HepG2 (cell line): ENCODE measurements at regions of chr4 and their contacts with region 1.

Region 1: GRCh38 chr4:170853422-170854021 is 763.8 kb upstream of the AADAT start:
- DNase-seq: peak; percentile 19
- ATAC-seq: peak; percentile 81
- H3K4me3 ChIP-seq: no peak overlapping the region
- H3K27ac ChIP-seq: no peak overlapping the region
- H3K4me1 ChIP-seq: no peaks in the 10 kb centered on the region
- H3K27me3 ChIP-seq: no peaks in the 10 kb centered on the region
- CTCF ChIP-seq: peak; percentile 68
- EP300 ChIP-seq: no peak
- POLR2A ChIP-seq: no peak
- RAD21 ChIP-seq: no peak

Region 2: DNA sequence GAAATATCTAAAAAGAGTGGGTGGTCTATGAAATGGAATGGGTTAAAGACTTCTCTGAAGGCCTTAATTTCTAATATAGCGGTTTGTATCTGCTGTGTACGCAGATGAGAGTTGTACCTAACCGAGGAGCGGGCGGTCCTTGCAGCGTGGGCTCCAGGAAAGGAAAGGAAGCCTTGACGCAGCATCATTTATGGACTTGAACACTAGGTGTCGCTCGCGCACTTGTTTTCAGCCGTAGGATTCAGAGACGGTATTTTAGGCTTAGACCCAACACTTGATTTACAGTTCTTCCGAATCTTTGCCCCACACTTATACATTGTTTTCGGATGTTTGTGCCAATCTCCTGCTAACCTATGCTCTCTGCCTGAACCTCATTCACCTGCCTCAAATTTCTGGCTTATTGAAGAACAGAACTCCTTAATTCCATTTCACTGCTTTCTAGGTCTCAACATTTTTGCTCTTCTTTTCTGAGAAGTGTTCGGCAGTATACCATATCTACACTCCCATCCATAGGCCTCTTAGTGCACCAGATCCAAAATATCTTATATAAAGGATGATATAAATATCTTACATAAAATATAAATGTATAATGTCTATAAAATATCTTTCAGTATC is 714.8 kb before region 1 on chr4:
- CTCF ChIA-PET with region 1: no interaction called
- POLR2A ChIA-PET with region 1: no interaction called
- in situ Hi-C with region 1: loop called (anchors 25 kb)
- intact Hi-C with region 1: no loop called
- DNase-seq: peak; percentile 57
- ATAC-seq: peak; percentile 94
- H3K4me3 ChIP-seq: no peak overlapping the region
- H3K27ac ChIP-seq: no peak overlapping the region
- H3K4me1 ChIP-seq: no peaks in the 10 kb centered on the region
- H3K27me3 ChIP-seq: no peaks in the 10 kb centered on the region
- CTCF ChIP-seq: peak; percentile 89
- EP300 ChIP-seq: no peak
- POLR2A ChIP-seq: no peak
- RAD21 ChIP-seq: no peak

Region 3: GRCh38 chr4:170259631-170260153 is 593.8 kb before region 1 on chr4:
- CTCF ChIA-PET with region 1: interaction called, 18 read pairs
- POLR2A ChIA-PET with region 1: no interaction called
- in situ Hi-C with region 1: no loop called
- intact Hi-C with region 1: loop called (anchors 1 kb)
- DNase-seq: peak; percentile 92
- ATAC-seq: peak; percentile 100
- H3K4me3 ChIP-seq: no peak overlapping the region
- H3K27ac ChIP-seq: no peak overlapping the region
- H3K4me1 ChIP-seq: no peaks in the 10 kb centered on the region
- H3K27me3 ChIP-seq: no peaks in the 10 kb centered on the region
- CTCF ChIP-seq: peak; percentile 95
- EP300 ChIP-seq: no peak
- POLR2A ChIP-seq: no peak
- RAD21 ChIP-seq: peak; percentile 72

Region 4: GRCh38 chr4:170307182-170307581 is 546.3 kb before region 1 on chr4:
- CTCF ChIA-PET with region 1: no interaction called
- POLR2A ChIA-PET with region 1: no interaction called
- in situ Hi-C with region 1: no loop called
- intact Hi-C with region 1: no loop called
- DNase-seq: no peak
- ATAC-seq: no peak
- H3K4me3 ChIP-seq: no peak overlapping the region
- H3K27ac ChIP-seq: no peak overlapping the region
- H3K4me1 ChIP-seq: no peaks in the 10 kb centered on the region
- H3K27me3 ChIP-seq: no peaks in the 10 kb centered on the region; a peak in 1 of 5 replicates
- CTCF ChIP-seq: no peak
- EP300 ChIP-seq: no peak
- POLR2A ChIP-seq: no peak
- RAD21 ChIP-seq: no peak

Region 5: DNA sequence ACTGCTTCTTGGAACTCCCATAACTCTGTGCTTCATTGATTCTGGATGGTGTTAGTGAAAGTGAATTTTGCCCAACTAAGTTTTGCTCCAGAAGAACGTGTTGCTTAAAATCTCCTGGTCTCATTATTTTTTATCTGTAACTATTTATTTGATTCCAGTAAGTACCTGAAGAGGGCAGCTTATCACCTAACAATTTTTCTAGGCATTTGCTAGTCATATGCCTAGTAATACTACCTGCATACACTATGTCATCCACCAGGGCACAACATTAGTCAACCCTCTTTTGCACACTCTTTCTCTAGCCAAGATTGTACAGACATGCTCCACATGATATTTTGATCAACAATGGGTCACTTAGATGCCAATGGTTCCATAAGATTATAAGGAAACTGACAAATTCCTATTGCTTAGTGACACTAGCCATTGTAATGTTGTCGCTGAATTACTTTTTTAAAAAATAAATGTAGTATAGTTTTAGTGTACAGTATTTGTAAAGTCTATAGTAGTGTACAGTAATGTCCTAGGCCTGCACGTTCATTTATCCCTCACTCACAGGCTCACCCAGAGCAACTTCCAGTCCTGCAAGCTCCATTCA is 263.8 kb before region 1 on chr4:
- CTCF ChIA-PET with region 1: interaction called, 4 read pairs
- POLR2A ChIA-PET with region 1: no interaction called
- in situ Hi-C with region 1: no loop called
- intact Hi-C with region 1: loop called (anchors 1 kb)
- DNase-seq: peak; percentile 36
- ATAC-seq: peak; percentile 86
- H3K4me3 ChIP-seq: no peak overlapping the region
- H3K27ac ChIP-seq: no peak overlapping the region
- H3K4me1 ChIP-seq: no peaks in the 10 kb centered on the region
- H3K27me3 ChIP-seq: no peaks in the 10 kb centered on the region; a peak in 1 of 5 replicates
- CTCF ChIP-seq: no peak; the same call in 1 of the 2 replicates
- EP300 ChIP-seq: no peak
- POLR2A ChIP-seq: no peak
- RAD21 ChIP-seq: no peak

Region 6: GRCh38 chr4:171246948-171247347 is 393.4 kb after region 1 on chr4:
- CTCF ChIA-PET with region 1: no interaction called
- POLR2A ChIA-PET with region 1: no interaction called
- in situ Hi-C with region 1: no loop called
- intact Hi-C with region 1: no loop called
- DNase-seq: no peak
- ATAC-seq: no peak
- H3K4me3 ChIP-seq: no peak overlapping the region
- H3K27ac ChIP-seq: no peak overlapping the region
- H3K4me1 ChIP-seq: no peaks in the 10 kb centered on the region
- H3K27me3 ChIP-seq: no peaks in the 10 kb centered on the region; a peak in 1 of 5 replicates
- CTCF ChIP-seq: no peak
- EP300 ChIP-seq: no peak
- POLR2A ChIP-seq: no peak
- RAD21 ChIP-seq: no peak